Activated naive CD4-positive, alpha-beta T cell treated with anti-CD3 and anti-CD28 coated beads, Interleukin-2, amount 10 ng/mL, durations not matched to agents 7 days and 5 days (primary cell): ENCODE measurements at regions of chr1 and their contacts with region 1.

Region 1: DNA sequence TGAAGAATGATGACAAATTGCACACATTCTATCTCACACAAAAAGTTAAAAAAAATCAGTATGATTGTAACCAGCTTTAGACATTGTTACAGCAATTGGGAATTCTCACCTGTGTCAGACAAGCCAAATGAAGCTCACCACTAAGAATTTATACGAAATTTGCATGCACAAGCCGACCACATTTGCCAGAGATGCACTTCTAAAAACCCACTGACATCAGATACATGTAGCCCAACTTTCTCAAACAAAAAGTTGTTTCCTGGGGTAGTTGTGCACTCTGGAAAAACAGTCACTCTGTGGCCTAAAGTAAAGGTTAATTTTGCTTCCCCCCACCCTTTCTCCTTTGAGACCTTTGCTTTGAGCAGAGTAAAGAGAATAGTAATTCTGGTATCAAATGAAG is 67.9 kb upstream of the IL12RB2 start:
- DNase-seq: no peak
- H3K4me3 Mint-ChIP-seq: no peak overlapping the region
- H3K27ac Mint-ChIP-seq: no peak overlapping the region
- H3K4me1 Mint-ChIP-seq: no peaks in the 10 kb centered on the region
- H3K27me3 Mint-ChIP-seq: no peaks in the 10 kb centered on the region

Region 2: DNA sequence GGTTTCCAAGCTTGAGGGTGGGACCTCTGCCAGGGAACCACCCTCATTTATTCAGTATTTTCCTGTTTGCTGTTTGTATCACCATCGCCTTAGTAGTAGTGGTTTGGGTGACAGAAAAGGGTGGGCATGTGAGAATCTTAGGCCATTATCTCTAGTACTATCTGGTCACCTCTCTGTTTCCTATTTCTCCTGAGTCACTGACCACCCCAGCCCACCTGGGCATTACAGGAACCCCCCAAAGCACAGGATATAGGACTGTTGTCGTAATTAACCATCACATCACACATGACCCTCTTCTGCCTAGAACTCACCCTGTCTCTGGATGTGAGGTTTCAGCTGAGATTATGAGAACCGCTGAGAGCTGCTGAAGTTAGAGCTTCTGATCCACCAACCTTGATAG is 13.1 kb before region 1 on chr1:
- CTCF ChIA-PET with region 1: no interaction called
- DNase-seq: no peak
- H3K4me3 Mint-ChIP-seq: no peak overlapping the region
- H3K27ac Mint-ChIP-seq: no peak overlapping the region
- H3K4me1 Mint-ChIP-seq: peaks cover 9% of the 10 kb centered on the region
- H3K27me3 Mint-ChIP-seq: no peaks in the 10 kb centered on the region

Region 3: DNA sequence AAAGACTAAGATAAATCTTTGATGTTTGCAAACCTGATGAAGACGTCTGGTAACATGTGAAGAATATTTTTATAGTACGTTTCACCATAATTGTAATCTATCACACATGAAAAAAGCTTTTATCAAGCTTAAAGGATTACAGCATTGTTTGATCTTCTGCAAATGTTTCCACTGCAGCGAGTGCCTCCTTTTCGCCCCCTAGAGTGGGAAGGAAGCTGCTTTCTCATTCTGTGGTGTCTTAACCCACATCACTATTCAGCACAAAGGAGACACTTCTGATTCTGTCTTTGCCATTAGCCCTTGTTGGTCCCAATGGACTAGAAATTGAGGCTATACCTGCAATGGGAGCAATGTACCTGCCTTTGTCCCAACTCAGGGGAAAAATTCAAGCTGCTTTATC is 21.9 kb after region 1 on chr1:
- CTCF ChIA-PET with region 1: interaction called, 10 read pairs
- DNase-seq: peak; percentile 62
- H3K4me3 Mint-ChIP-seq: no peak overlapping the region
- H3K27ac Mint-ChIP-seq: no peak overlapping the region
- H3K4me1 Mint-ChIP-seq: peaks cover 46% of the 10 kb centered on the region
- H3K27me3 Mint-ChIP-seq: no peaks in the 10 kb centered on the region